Aorta (tissue), 5 donors: ENCODE measurements at regions of chr19 and their contacts with region 1.

Region 1: DNA sequence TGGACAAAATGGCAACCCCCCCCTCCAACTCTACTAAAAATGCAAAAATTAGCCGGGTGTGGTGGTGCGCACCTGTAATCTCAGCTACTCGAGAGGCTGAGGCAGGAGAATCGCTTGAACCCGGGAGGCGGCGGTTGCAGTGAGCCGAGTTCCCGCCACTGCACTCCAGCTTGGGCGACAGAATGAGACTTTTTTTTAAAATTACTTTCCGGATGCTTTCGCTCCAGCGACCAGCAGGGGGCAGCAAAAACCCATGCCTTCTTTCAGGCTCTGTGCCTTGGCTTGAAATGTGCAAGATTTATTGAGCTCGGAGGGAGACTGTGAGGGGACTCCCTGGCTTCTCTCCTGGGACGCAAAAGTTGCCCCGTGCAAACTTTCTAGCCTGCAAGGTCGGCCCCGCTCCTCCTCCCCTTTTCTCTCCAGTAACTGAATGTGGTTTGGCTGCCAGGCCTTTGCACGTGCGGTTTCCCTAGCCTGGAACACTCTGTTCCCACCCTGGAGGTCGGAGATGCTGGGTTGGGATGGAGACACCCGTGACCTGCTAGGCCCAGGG is 61.4 kb upstream of the NFIC start:
- DNase-seq: peak; percentile 77 to 93
- ATAC-seq: peak; percentile 78
- H3K4me3 ChIP-seq: no peak overlapping the region
- H3K27ac ChIP-seq: no peak overlapping the region
- H3K4me1 ChIP-seq: no peaks in the 10 kb centered on the region
- H3K27me3 ChIP-seq: peaks cover 0 to 1% of the 10 kb centered on the region in 2 donors

Region 2: GRCh38 chr19:3721131-3721886 is 416.4 kb after region 1 on chr19:
- intact Hi-C with region 1: loop called in 1 of 2 experiments (anchors 10 kb)
- DNase-seq: peak; percentile 85 to 92
- ATAC-seq: peak; percentile 88
- H3K4me3 ChIP-seq: no peak overlapping the region
- H3K27ac ChIP-seq: no peak overlapping the region
- H3K4me1 ChIP-seq: no peaks in the 10 kb centered on the region
- H3K27me3 ChIP-seq: no peaks in the 10 kb centered on the region